SK-N-SH (cell line): ENCODE measurements at regions of chr2 and their contacts with region 1.

Region 1: GRCh38 chr2:127479219-127479825 is 47.0 kb downstream of the IWS1 start:
- DNase-seq: peak; percentile 56
- H3K4me3 ChIP-seq: no peak overlapping the region
- H3K27ac ChIP-seq: no peak overlapping the region
- H3K4me1 ChIP-seq: no peaks in the 10 kb centered on the region
- H3K27me3 ChIP-seq: no peaks in the 10 kb centered on the region
- CTCF ChIP-seq: peak; percentile 91
- EP300 ChIP-seq: no peak
- RAD21 ChIP-seq: peak; percentile 84

Region 2: DNA sequence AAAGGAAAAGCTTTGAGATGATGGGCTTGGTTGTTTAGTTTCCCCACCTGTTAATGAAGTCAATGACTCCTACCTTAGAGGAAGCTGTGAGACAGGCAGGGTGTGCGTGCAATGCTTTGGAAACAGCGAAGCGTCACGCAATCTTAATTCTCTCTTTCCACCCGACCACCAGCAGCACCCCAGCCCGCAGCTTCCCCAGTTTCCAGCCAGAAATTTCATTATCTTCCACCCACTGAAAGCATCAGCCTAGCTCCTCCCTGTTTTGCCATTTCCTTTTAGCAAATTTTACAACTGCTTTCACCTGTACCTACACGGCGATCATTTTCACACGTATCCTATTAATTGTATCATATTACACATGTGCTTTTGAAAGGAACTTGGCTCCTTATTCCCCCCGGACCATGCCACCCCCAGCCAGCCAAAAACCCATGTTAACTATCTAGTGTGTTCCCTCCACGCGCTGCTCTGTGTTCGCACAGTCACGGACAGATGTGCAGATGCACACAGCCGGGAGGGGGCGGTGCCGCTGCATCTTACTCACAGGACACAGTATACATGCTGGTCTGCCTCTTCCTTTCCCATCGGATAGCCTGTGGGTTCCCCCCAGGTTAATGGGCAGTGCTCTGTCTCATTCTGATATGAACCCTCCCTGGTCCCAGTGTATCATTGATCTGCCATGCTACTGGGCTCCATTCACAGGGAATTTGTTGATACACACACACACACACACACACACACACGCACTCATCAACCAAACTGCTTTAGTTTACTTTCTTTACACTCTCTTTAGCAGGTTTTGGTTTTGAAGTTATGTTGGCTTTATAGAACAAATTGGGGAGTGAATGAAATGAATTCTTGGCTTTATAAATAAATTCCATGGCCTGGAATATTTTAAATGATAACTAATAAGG is 281.6 kb before region 1 on chr2:
- CTCF ChIA-PET with region 1: interaction called, 27 read pairs
- POLR2A ChIA-PET with region 1: no interaction called
- DNase-seq: peak; percentile 87
- H3K4me3 ChIP-seq: no peak overlapping the region; a peak in 2 of 4 replicates
- H3K27ac ChIP-seq: no peak overlapping the region
- H3K4me1 ChIP-seq: no peaks in the 10 kb centered on the region; a peak in 1 of 4 replicates
- H3K27me3 ChIP-seq: no peaks in the 10 kb centered on the region; the same call in 1 of the 2 replicates
- CTCF ChIP-seq: peak; percentile 59
- EP300 ChIP-seq: no peak
- RAD21 ChIP-seq: peak; percentile 84

Region 3: GRCh38 chr2:127313406-127313805 is 165.9 kb before region 1 on chr2:
- CTCF ChIA-PET with region 1: interaction called, 10 read pairs
- POLR2A ChIA-PET with region 1: no interaction called
- DNase-seq: no peak
- H3K4me3 ChIP-seq: no peak overlapping the region
- H3K27ac ChIP-seq: no peak overlapping the region
- H3K4me1 ChIP-seq: no peaks in the 10 kb centered on the region
- H3K27me3 ChIP-seq: no peaks in the 10 kb centered on the region
- CTCF ChIP-seq: no peak
- EP300 ChIP-seq: no peak
- RAD21 ChIP-seq: no peak

Region 4: DNA sequence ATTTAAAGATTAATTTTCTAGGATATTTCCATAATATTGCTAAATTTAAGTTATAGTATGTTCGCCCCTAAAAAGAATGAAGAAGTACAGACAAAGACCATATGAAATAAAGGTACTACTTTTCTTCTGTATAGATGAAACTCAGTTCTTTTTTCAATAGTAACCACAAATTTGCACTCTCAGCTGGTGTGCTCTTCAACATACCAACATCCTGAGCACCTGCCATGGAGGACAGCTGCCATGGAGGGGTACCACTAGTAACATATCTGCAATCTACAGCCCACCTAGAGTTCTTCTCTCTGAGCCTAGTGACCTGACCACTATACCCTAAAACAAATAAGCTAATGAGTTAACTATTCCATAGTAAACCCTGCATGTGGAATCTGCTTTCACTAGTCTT is 148.6 kb before region 1 on chr2:
- CTCF ChIA-PET with region 1: interaction called, 121 read pairs
- POLR2A ChIA-PET with region 1: no interaction called
- DNase-seq: no peak
- H3K4me3 ChIP-seq: no peak overlapping the region
- H3K27ac ChIP-seq: no peak overlapping the region
- H3K4me1 ChIP-seq: no peaks in the 10 kb centered on the region; a peak in 1 of 4 replicates
- H3K27me3 ChIP-seq: no peaks in the 10 kb centered on the region
- CTCF ChIP-seq: no peak
- EP300 ChIP-seq: no peak
- RAD21 ChIP-seq: no peak

Region 5: GRCh38 chr2:127415593-127416505 is 63.5 kb before region 1 on chr2:
- CTCF ChIA-PET with region 1: interaction called, 18 read pairs
- POLR2A ChIA-PET with region 1: no interaction called
- DNase-seq: peak; percentile 90
- H3K4me3 ChIP-seq: peak overlapping the region in 1 of 2 experiments; percentile 39; a peak in 2 of 4 replicates
- H3K27ac ChIP-seq: no peak overlapping the region
- H3K4me1 ChIP-seq: peaks cover 17 to 23% of the 10 kb centered on the region in 2 experiments; a peak in 3 of 4 replicates
- H3K27me3 ChIP-seq: no peaks in the 10 kb centered on the region
- CTCF ChIP-seq: peak; percentile 58
- EP300 ChIP-seq: no peak
- RAD21 ChIP-seq: peak; percentile 58

Region 6: DNA sequence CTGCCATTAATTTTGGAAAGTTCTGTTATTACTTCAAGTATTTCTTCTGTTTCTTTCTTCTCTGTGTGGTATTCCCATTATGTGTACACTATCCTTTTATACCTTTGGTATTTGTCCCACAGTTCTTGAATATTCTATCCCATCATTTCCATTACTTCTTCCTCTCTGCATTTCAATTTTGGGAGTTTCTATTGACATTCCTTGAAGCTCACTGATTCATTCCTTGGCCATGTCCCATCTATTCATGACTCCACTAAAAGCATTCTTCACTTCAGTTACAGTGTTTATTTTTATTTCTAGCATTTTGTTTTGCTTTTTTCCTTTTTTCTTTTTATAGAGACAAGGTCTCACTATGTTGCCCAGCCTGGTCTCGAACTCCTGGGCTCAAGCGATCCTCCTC is 30.8 kb before region 1 on chr2:
- CTCF ChIA-PET with region 1: interaction called, 12 read pairs
- POLR2A ChIA-PET with region 1: no interaction called
- DNase-seq: no peak
- H3K4me3 ChIP-seq: no peak overlapping the region
- H3K27ac ChIP-seq: no peak overlapping the region
- H3K4me1 ChIP-seq: no peaks in the 10 kb centered on the region; a peak in 1 of 4 replicates
- H3K27me3 ChIP-seq: no peaks in the 10 kb centered on the region
- CTCF ChIP-seq: no peak
- EP300 ChIP-seq: no peak
- RAD21 ChIP-seq: no peak

Region 7: GRCh38 chr2:127508631-127509034 is 29.3 kb after region 1 on chr2:
- CTCF ChIA-PET with region 1: interaction called, 26 read pairs
- POLR2A ChIA-PET with region 1: no interaction called
- DNase-seq: peak; percentile 66
- H3K4me3 ChIP-seq: no peak overlapping the region
- H3K27ac ChIP-seq: peak overlapping the region; percentile 43 to 86
- H3K4me1 ChIP-seq: peaks cover 10 to 52% of the 10 kb centered on the region in 2 experiments
- H3K27me3 ChIP-seq: no peaks in the 10 kb centered on the region
- CTCF ChIP-seq: no peak
- EP300 ChIP-seq: peak in 1 of 2 experiments; percentile 82; a peak in 2 of 4 replicates
- RAD21 ChIP-seq: no peak